Mammary epithelial cell (primary cell): ENCODE measurements at regions of chr7 and their contacts with region 1.

Region 1: DNA sequence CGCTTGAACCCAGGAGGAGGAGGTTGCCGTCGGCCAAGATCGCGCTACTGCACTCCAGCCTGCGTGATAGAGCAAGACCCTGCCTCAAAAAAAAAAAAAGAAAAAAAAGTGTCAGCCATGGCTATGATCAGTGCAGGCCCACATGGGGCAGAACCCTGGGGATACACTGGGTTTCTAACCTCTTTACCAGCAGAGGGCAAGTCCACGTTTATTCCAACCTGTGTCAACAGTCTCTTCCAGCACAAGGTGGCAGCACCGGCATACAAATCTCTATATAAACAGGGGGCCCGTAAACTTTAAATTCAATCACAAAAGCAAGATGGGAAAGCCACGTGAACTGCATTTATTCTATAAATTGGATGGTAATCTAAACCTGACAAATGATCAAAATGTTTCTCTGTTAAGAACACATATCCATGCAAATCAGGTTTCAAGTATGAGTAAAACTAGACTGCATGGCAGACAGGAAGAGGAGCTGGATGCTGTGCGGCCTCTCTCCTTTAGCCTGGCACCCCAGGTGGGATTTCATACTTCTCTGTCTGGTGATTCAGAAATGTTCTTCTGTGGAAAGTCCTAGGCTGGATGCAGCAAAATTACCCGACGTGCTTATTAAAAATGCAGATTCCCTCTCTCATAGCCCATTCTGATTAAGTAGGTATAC is 60.0 kb upstream of the STEAP1B start:
- DNase-seq: peak; percentile 61
- H3K4me3 ChIP-seq: no peak overlapping the region
- H3K27ac ChIP-seq: no peak overlapping the region
- H3K4me1 ChIP-seq: peaks cover 45% of the 10 kb centered on the region
- H3K27me3 ChIP-seq: no peaks in the 10 kb centered on the region
- CTCF ChIP-seq: peak; percentile 93

Region 2: GRCh38 chr7:22601812-22602565 is 42.0 kb after region 1 on chr7:
- CTCF ChIA-PET with region 1: no interaction called
- dilution Hi-C with region 1: no loop called
- in situ Hi-C with region 1: no loop called
- intact Hi-C with region 1: loop called (anchors 5 kb)
- DNase-seq: peak; percentile 27
- H3K4me3 ChIP-seq: no peak overlapping the region
- H3K27ac ChIP-seq: no peak overlapping the region
- H3K4me1 ChIP-seq: peaks cover 14% of the 10 kb centered on the region
- H3K27me3 ChIP-seq: no peaks in the 10 kb centered on the region
- CTCF ChIP-seq: no peak

Region 3: DNA sequence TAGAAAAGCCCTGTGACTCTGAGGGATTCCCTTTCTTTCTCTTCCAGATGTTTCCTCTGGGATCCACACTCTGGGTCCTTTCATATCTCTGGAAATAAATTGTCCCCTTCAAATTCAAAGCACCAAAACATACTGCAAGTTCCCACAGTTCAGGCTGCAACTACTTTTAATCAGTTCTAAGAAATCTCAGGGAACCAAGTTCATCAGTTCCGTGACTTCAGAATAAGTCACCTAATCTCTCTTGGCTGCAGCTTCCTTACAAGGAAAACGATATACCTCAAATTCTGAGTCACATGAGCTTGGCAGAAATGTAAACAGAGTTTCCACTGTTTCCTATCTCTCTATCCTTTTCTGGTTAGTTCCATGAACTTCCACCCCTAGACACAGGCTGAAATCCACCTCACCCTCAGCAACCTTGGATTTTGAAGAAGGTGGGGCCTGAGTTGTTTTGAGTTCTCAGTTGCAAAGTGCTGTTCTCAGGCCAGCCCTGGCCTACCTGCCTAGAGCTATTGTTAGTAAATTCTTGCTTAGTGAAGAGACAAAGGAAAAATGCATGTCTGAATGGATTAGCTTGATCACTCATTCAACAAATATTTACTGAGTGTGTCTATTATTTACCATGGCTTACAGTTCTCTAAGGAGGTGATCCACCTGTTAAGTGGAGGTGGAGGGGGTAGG is 107.7 kb after region 1 on chr7:
- CTCF ChIA-PET with region 1: no interaction called
- dilution Hi-C with region 1: no loop called
- in situ Hi-C with region 1: no loop called
- intact Hi-C with region 1: loop called (anchors 2 kb)
- DNase-seq: peak; percentile 92
- H3K4me3 ChIP-seq: no peak overlapping the region
- H3K27ac ChIP-seq: peak overlapping the region; percentile 55
- H3K4me1 ChIP-seq: peaks cover 45% of the 10 kb centered on the region
- H3K27me3 ChIP-seq: no peaks in the 10 kb centered on the region
- CTCF ChIP-seq: no peak

Region 4: GRCh38 chr7:22726345-22727185 is 166.6 kb after region 1 on chr7:
- CTCF ChIA-PET with region 1: interaction called, 25 read pairs
- dilution Hi-C with region 1: no loop called
- in situ Hi-C with region 1: loop called (anchors 5 kb)
- intact Hi-C with region 1: loop called (anchors 1 kb)
- DNase-seq: peak; percentile 84
- H3K4me3 ChIP-seq: no peak overlapping the region
- H3K27ac ChIP-seq: peak overlapping the region; percentile 69
- H3K4me1 ChIP-seq: peaks cover 38% of the 10 kb centered on the region
- H3K27me3 ChIP-seq: no peaks in the 10 kb centered on the region
- CTCF ChIP-seq: peak; percentile 46 to 76

Region 5: GRCh38 chr7:22782616-22783232 is 222.8 kb after region 1 on chr7:
- CTCF ChIA-PET with region 1: interaction called, 5 read pairs
- dilution Hi-C with region 1: no loop called
- in situ Hi-C with region 1: no loop called
- intact Hi-C with region 1: loop called (anchors 1 kb)
- DNase-seq: peak; percentile 41
- H3K4me3 ChIP-seq: no peak overlapping the region
- H3K27ac ChIP-seq: no peak overlapping the region
- H3K4me1 ChIP-seq: peaks cover 8% of the 10 kb centered on the region
- H3K27me3 ChIP-seq: no peaks in the 10 kb centered on the region
- CTCF ChIP-seq: peak; percentile 88 to 90

Region 6: GRCh38 chr7:23055582-23056178 is 495.7 kb after region 1 on chr7:
- CTCF ChIA-PET with region 1: no interaction called
- dilution Hi-C with region 1: no loop called
- in situ Hi-C with region 1: loop called (anchors 10 kb)
- intact Hi-C with region 1: no loop called
- DNase-seq: peak; percentile 57
- H3K4me3 ChIP-seq: no peak overlapping the region
- H3K27ac ChIP-seq: no peak overlapping the region
- H3K4me1 ChIP-seq: peaks cover 2% of the 10 kb centered on the region
- H3K27me3 ChIP-seq: no peaks in the 10 kb centered on the region
- CTCF ChIP-seq: peak; percentile 94 to 95

Region 7: GRCh38 chr7:23181684-23182553 is 622.0 kb after region 1 on chr7 and contains the start of gene NUP42:
- CTCF ChIA-PET with region 1: no interaction called
- dilution Hi-C with region 1: no loop called
- in situ Hi-C with region 1: no loop called
- intact Hi-C with region 1: loop called (anchors 5 kb)
- DNase-seq: peak; percentile 98
- H3K4me3 ChIP-seq: peak within 1 kb of the TSS; percentile 56 to 85 (median 85)
- H3K27ac ChIP-seq: peak within 1 kb of the TSS; percentile 95
- H3K4me1 ChIP-seq: peaks cover 12% of the 10 kb centered on the region
- H3K27me3 ChIP-seq: no peaks in the 10 kb centered on the region
- CTCF ChIP-seq: no peak
- total RNA-seq, gene NUP42: 29.0 to 36.0 TPM